Vagina (tissue), 2 donors: ENCODE measurements at regions of chr7 and their contacts with region 1.

Region 1: GRCh38 chr7:98439484-98439883 is 38.6 kb upstream of the BAIAP2L1 start:
- DNase-seq: no peak
- H3K4me3 ChIP-seq: no peak overlapping the region
- H3K27ac ChIP-seq: no peak overlapping the region
- H3K4me1 ChIP-seq: no peaks in the 10 kb centered on the region
- H3K27me3 ChIP-seq: no peaks in the 10 kb centered on the region
- CTCF ChIP-seq: no peak
- POLR2A ChIP-seq: no peak

Region 2: GRCh38 chr7:98841179-98841997 is 401.9 kb after region 1 on chr7:
- intact Hi-C with region 1: loop called (anchors 5 kb)
- DNase-seq: no peak
- H3K4me3 ChIP-seq: no peak overlapping the region
- H3K27ac ChIP-seq: no peak overlapping the region
- H3K4me1 ChIP-seq: no peaks in the 10 kb centered on the region
- H3K27me3 ChIP-seq: no peaks in the 10 kb centered on the region
- CTCF ChIP-seq: peak; percentile 94 to 99 (median 99)
- POLR2A ChIP-seq: no peak